ENCODE measurements at regions of chr1 and their contacts with region 1.

Region 1: DNA sequence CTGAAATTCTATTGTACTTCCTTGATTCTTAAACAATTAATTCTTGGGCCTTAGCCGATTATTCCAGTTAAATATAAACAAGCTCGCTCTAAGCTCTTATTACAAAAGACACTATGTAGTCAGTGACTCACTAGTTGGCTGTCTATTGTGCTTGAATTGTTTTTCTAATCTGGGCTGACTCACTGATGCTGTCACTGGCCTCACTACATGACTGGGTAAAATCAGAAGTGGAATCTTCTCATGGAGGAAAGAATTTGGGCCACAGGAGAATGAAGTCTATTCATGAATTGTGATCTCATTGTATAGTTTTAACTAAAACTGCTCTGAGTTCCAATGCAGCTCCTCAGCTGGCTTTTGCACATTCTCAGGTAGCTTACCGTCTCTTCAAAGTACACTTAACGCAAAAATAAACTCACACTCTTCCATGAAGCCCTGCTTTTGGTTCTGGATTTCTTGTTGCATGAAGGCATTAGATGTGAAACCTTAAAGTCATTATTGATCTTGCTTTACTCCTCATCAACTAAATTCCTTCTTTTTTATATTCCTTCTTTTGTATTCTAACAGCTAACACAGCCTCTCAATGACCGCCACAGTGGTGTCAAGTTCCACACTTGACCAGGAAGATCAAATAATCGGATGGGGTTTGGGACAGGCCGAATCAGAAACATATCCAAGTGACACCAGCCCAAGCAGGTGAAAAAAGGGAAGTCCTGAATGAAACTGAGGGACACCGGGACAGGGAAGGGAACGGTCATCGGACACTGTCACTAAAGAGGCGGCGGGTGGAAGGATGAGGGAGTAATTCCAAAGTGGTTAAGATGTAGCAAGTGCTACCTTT is 80.9 kb upstream of the LBR start:
- DNase-seq: peak; percentile 89
- H3K4me3 ChIP-seq: no peak overlapping the region
- CTCF ChIP-seq: no peak

Region 2: DNA sequence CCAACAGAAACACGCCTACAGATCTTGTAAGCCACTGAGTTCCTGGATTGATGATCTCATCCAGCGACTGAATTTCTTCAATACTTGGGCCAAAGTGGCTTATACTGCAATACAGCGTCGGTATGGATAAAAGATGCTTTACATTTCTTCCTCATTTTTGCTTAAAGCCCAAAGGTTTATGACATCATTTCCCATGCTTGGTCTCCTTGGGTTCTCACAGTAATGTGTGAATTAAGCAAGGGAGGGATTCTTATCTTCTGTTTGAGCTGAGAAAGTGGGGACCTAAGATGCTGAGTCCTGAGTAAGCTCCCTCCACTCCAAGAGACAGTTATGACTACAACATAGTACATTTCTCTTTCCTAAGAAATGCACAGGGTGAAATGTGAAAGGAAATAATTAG is 120.4 kb before region 1 on chr1:
- CTCF ChIA-PET with region 1: no interaction called
- POLR2A ChIA-PET with region 1: no interaction called
- DNase-seq: no peak
- H3K4me3 ChIP-seq: no peak overlapping the region
- CTCF ChIP-seq: no peak

Region 3: GRCh38 chr1:225523263-225523950 is 14.7 kb after region 1 on chr1:
- CTCF ChIA-PET with region 1: interaction called, 10 read pairs
- POLR2A ChIA-PET with region 1: no interaction called
- DNase-seq: no peak
- H3K4me3 ChIP-seq: no peak overlapping the region
- CTCF ChIP-seq: no peak

Region 4: DNA sequence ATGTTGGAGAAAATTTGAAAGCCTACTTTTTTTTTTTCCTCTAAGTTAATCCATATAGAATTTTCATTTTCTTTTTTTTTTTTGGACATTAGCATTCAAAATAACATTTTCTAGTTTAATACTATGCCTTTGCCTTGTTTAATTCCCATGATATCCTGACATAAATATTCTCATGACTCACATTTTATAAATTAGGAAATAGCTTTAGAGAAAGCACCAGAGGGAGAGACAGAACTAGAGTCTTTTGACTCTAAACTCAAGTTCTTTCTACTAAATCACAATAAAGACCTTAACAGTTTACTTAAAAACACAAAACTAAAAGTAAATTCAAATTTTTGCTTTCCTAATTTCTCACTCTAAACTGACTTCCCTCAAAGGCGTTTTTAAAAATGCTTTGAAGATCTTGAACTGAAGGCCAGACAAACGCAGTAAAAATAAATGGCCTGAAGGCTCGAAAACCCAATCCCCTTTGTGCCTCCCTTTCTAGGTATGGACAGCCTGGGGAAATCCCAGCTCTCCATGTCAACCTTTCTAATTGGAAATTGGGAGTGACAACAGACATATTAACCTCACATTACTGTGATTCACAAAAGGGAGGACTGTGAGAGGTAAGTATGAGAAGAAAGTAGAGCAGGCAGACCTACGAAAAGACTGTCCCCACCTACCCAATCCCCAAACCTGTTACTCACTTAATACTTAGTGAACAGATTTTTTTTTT is 39.5 kb after region 1 on chr1:
- CTCF ChIA-PET with region 1: no interaction called
- POLR2A ChIA-PET with region 1: no interaction called
- DNase-seq: no peak
- H3K4me3 ChIP-seq: no peak overlapping the region
- CTCF ChIP-seq: no peak

Measured in AG04449 (cell line).